ENCODE measurements at regions of chr3 and their contacts with region 1.

Region 1: DNA sequence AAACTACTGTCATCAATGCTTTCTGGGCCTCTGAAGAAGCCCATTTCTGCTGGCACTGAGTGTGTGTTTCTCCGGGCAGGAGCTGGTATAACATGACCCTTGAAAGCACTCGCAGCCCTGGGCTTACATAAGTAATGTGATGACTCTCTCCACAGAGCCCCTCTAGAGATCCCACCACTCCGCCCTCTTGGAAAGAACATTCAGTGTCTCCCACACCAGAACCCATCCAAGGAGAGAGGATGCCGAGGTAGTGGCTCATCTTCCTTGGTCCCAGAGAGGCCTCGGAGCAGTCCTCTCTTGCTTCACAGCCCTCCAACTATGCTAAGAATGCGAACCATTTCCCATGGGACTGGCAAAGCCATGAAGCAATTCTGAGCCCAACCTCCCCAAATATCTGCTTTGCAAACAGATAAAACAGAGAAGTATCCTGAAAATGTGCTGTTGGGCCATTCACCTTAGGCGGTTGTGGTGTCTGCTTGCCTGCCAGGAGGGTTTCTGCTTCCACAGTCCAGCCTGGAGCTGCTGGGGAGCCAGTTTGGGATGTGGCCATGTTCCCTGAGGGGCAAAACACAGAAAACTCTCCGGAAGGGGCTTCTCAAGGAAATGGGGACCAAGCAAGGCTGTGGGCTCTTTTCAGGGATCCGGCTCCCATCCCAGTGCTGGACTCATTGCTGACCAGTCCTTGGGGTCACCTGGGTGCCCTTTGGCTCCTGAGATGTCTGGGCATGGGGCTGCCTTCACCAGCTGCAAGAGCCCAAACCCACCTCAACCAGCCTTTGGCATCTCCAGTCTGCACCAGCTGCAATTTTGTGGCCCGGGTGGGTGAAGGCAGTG is 47.3 kb downstream of the AMOTL2 start:
- DNase-seq: peak; percentile 97
- ATAC-seq: peak; percentile 64
- H3K4me3 ChIP-seq: no peak overlapping the region
- H3K27ac ChIP-seq: peak overlapping the region; percentile 98
- H3K4me1 ChIP-seq: peaks cover 45% of the 10 kb centered on the region
- H3K27me3 ChIP-seq: no peaks in the 10 kb centered on the region
- CTCF ChIP-seq: no peak
- POLR2A ChIP-seq: no peak
- RAD21 ChIP-seq: no peak; the same call in 1 of the 2 replicates

Region 2: GRCh38 chr3:134134240-134134639 is 192.7 kb before region 1 on chr3:
- CTCF ChIA-PET with region 1: no interaction called
- POLR2A ChIA-PET with region 1: no interaction called
- dilution Hi-C with region 1: no loop called
- in situ Hi-C with region 1: no loop called
- intact Hi-C with region 1: no loop called
- DNase-seq: no peak
- ATAC-seq: no peak
- H3K4me3 ChIP-seq: no peak overlapping the region
- H3K27ac ChIP-seq: no peak overlapping the region
- H3K4me1 ChIP-seq: no peaks in the 10 kb centered on the region; the same call in 1 of the 2 replicates
- H3K27me3 ChIP-seq: no peaks in the 10 kb centered on the region
- CTCF ChIP-seq: no peak
- POLR2A ChIP-seq: no peak
- RAD21 ChIP-seq: no peak

Region 3: DNA sequence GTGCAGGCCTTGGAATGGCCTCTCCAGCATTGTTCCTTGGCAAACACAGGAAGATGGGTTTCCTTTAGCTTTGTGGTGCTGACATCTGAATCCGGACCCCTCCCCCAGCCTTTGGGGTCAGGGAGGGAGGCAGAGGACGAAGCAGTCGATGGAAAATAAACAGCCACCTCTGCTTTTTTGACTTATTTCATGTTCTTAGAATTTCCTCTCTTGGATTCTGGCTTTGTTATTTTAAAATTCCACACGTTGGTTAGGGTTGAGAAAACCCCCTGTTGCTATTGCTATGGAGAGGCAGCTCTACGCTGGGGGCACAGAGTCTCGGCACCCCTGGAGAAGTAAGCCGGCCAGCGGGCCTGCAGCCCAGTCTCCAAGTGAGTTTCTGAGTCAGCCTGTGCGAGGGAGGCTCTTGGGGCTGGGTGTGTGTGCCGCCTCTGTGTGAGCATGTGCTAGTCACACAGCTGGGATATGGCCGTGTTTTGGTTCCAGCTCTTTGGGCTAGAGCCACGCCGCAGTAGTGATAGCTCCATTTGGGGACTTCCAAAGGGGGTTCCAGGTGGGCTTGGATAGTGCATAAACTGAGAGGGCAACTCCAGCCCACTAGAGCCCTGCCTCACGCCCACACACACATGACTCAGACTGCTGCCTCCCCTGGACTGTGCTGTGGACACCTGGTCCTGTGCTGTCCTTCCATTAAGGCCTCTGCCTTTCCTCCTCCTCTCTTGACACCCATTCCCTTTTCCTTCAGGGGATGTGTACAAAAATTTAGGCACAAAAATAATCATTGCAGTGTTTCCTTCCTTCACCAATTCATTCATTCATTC is 11.5 kb before region 1 on chr3:
- CTCF ChIA-PET with region 1: interaction called, 3 read pairs
- POLR2A ChIA-PET with region 1: interaction called, 4 read pairs
- dilution Hi-C with region 1: no loop called
- in situ Hi-C with region 1: no loop called
- intact Hi-C with region 1: loop called (anchors 1 kb)
- DNase-seq: peak; percentile 82
- ATAC-seq: peak; percentile 39
- H3K4me3 ChIP-seq: no peak overlapping the region
- H3K27ac ChIP-seq: peak overlapping the region; percentile 98
- H3K4me1 ChIP-seq: peaks cover 41% of the 10 kb centered on the region
- H3K27me3 ChIP-seq: no peaks in the 10 kb centered on the region
- CTCF ChIP-seq: no peak
- POLR2A ChIP-seq: no peak
- RAD21 ChIP-seq: no peak

Region 4: GRCh38 chr3:134350861-134351333 is 23.9 kb after region 1 on chr3:
- CTCF ChIA-PET with region 1: no interaction called
- POLR2A ChIA-PET with region 1: interaction called, 3 read pairs
- dilution Hi-C with region 1: no loop called
- in situ Hi-C with region 1: no loop called
- intact Hi-C with region 1: loop called (anchors 2 kb)
- DNase-seq: no peak
- ATAC-seq: no peak
- H3K4me3 ChIP-seq: no peak overlapping the region
- H3K27ac ChIP-seq: no peak overlapping the region
- H3K4me1 ChIP-seq: peaks cover 14% of the 10 kb centered on the region
- H3K27me3 ChIP-seq: no peaks in the 10 kb centered on the region
- CTCF ChIP-seq: no peak
- POLR2A ChIP-seq: no peak
- RAD21 ChIP-seq: no peak

Region 5: GRCh38 chr3:134357261-134358184 is 30.5 kb after region 1 on chr3:
- CTCF ChIA-PET with region 1: interaction called, 12 read pairs
- POLR2A ChIA-PET with region 1: no interaction called
- dilution Hi-C with region 1: no loop called
- in situ Hi-C with region 1: no loop called
- intact Hi-C with region 1: loop called (anchors 2 kb)
- DNase-seq: peak; percentile 96
- ATAC-seq: peak; percentile 73
- H3K4me3 ChIP-seq: no peak overlapping the region
- H3K27ac ChIP-seq: peak overlapping the region; percentile 95
- H3K4me1 ChIP-seq: peaks cover 60% of the 10 kb centered on the region
- H3K27me3 ChIP-seq: no peaks in the 10 kb centered on the region
- CTCF ChIP-seq: no peak
- POLR2A ChIP-seq: peak; percentile 56
- RAD21 ChIP-seq: peak; percentile 36

Measured in IMR-90 (cell line).